K562 (cell line): ENCODE measurements at regions of chr18 and their contacts with region 1.

Region 1: GRCh38 chr18:56638271-56639093 is at the start of gene TXNL1:
- DNase-seq: peak; percentile 93 to 97 (median 94)
- ATAC-seq: peak; percentile 93
- H3K4me3 ChIP-seq: peak within 1 kb of the TSS; percentile 76
- H3K27ac ChIP-seq: peak within 1 kb of the TSS; percentile 92
- H3K4me1 ChIP-seq: peaks cover 0 to 2% of the 10 kb centered on the region in 2 experiments; a peak in 3 of 5 replicates
- H3K27me3 ChIP-seq: no peaks in the 10 kb centered on the region
- CTCF ChIP-seq: no peak
- EP300 ChIP-seq: 0 out of 2 replicates have a peak, but pooled peaks have one; percentile 28
- POLR2A ChIP-seq: peak; percentile 80
- RAD21 ChIP-seq: no peak
- polyA plus RNA-seq, gene TXNL1: 45.4 to 48.1 TPM

Region 2: GRCh38 chr18:55384551-55385275 is 1253.8 kb before region 1 on chr18:
- CTCF ChIA-PET with region 1: no interaction called
- POLR2A ChIA-PET with region 1: no interaction called
- in situ Hi-C with region 1: no loop called
- intact Hi-C with region 1: loop called (anchors 10 kb)
- DNase-seq: peak; percentile 34 to 57 (median 52)
- ATAC-seq: peak; percentile 53; the same call in 1 of the 3 replicates
- H3K4me3 ChIP-seq: no peak overlapping the region
- H3K27ac ChIP-seq: no peak overlapping the region
- H3K4me1 ChIP-seq: peaks cover 8 to 26% of the 10 kb centered on the region in 2 experiments
- H3K27me3 ChIP-seq: no peaks in the 10 kb centered on the region
- CTCF ChIP-seq: peak; percentile 62 to 64 (median 63)
- EP300 ChIP-seq: no peak
- POLR2A ChIP-seq: no peak
- RAD21 ChIP-seq: peak; percentile 15 to 62

Region 3: DNA sequence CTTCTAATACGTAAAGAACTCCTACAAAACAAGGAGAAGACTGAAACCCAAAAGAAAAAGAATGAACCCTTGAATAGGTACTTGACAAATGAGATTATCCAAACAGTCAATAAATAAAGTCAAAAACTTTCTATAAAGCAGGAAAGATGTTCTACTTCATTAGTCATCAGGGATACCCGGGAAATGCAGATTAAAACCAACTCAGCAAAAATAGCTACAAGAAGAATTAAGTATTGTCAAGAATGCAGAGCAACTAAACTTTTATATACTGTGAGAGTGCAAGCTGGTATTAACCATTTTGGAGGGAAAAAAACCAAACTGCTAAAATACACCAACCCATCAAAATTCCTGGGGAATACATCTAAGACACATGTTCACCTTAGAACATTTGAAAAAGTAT is 10.5 kb before region 1 on chr18:
- CTCF ChIA-PET with region 1: no interaction called
- POLR2A ChIA-PET with region 1: interaction called, 10 read pairs
- in situ Hi-C with region 1: no loop called
- intact Hi-C with region 1: no loop called
- DNase-seq: no peak
- ATAC-seq: no peak
- H3K4me3 ChIP-seq: no peak overlapping the region
- H3K27ac ChIP-seq: no peak overlapping the region
- H3K4me1 ChIP-seq: no peaks in the 10 kb centered on the region; a peak in 2 of 5 replicates
- H3K27me3 ChIP-seq: no peaks in the 10 kb centered on the region
- CTCF ChIP-seq: no peak
- EP300 ChIP-seq: no peak
- POLR2A ChIP-seq: no peak
- RAD21 ChIP-seq: no peak